HEK293T (cell line): ENCODE measurements at regions of chr6 and their contacts with region 1.

Region 1: GRCh38 chr6:90241229-90241880 is 55.3 kb downstream of the BACH2 start:
- DNase-seq: peak; percentile 22

Region 2: GRCh38 chr6:90160013-90160412 is 81.3 kb before region 1 on chr6:
- CTCF ChIA-PET with region 1: no interaction called
- POLR2A ChIA-PET with region 1: no interaction called
- DNase-seq: no peak

Region 3: DNA sequence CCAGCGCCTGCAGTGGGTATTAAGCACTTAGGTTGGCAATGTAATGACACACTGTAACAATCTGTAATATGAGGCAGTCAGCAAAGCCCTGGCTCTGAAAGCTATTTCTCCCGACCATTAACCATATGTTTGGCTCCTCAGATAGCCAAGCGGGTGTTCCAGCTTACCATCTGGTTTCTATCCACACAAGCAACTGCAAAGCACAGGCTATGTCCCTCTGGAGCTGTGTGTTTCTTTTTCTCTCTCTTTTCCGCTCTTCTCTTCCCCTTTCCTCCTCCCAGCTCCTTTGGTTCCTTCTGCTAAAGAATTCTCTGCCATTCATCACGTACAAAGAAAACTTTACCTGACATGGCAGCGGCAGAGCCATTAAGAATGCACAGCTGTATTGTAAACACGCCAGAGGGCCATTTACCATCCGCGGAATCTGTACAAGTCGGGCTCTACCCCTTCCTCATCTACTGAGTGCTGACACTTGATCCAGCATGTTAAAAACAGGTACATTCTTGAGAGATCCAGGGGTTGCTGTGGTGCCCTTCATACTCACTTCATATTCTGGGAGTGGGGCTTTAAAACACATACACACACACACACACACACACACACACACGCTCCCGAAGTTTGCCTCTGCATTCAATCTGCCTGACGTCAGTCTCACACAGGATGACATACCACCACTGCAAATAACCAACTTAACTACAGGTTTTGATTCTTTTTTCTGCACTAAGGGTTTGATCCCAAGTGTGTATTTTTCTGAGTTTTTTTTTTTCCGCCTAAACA is 22.0 kb before region 1 on chr6:
- CTCF ChIA-PET with region 1: interaction called, 3 read pairs
- POLR2A ChIA-PET with region 1: interaction called, 12 read pairs
- DNase-seq: peak; percentile 30